Activated CD4-positive, alpha-beta memory T cell treated with anti-CD3 and anti-CD28 coated beads for 36 hours (primary cell): ENCODE measurements at regions of chr1 and their contacts with region 1.

Region 1: DNA sequence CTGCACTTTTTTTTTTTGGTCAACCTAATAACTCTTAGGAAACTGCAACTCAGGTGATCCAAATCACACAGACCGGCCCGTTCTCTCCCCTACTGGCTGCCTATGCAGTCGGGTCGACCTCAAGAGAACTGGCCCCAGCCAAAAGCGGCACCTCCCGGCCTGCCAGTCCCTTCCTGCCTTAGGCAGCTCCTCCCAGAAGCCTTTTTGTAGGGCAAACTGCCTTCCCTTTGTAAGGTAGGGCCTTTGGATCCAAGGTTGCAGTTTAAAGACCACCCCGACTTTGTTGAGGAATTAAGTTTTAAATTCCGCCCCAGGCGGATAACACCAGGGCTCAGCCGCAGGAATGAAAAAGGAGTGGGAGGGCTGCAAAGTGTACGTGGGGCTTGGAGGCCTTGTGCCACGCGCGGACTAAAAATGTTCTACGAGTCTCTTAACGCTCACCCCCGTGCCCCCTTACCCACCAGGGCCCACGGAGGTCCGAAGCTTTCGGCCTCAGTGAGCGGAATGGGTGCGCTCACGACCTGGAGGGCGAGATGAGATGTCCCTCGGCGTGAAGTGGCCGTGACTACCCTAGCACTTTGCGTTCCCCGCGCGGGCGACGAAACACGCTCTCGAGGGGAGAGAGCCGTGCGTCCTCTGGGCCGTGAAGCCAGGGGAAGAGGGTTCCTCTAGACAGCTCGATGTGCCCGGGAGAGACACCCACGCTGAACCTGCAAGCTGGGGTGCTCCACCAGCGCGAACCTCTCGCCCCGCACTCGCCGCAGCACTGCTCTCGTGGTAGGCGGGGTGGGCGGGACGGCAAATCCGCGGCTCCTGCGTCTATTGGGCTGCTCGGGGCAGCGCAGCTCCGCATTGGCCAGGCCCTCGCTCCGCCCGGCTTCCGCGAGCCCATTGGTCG is 489 bp upstream of the ST3GAL3 start:
- DNase-seq: peak; percentile 95
- H3K4me3 Mint-ChIP-seq: peak overlapping the region; percentile 85
- H3K27ac Mint-ChIP-seq: peak overlapping the region; percentile 58
- H3K4me1 Mint-ChIP-seq: peaks cover 29% of the 10 kb centered on the region
- H3K27me3 Mint-ChIP-seq: no peaks in the 10 kb centered on the region

Region 2: DNA sequence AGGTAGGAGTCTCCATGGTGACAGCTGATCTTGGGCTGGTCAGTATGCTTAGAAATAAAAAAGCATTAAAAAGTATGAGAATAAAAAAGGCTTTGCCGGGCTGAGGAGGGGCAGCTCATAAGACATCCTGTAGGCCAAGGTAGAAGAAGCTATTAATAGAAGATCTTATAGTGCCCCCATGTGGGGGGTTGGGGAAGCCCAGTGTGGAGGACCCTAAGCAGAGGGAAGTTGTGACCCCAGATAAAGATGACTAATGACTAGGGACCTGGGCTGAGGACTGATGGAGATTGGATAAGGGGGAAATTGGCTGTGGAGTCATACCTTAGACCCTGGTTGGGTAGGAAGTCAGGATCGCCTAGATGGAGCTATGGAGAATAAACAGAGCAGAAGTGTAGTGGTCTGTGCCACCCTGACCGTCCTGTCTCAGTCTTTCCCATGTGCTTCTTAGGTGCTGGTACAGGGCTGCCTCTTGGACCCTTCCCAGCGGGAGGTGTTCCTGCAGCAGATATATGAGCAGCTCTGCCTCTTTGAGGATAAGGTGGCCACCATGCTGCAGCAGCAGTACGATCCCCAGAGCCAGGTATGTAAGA is 292.1 kb before region 1 on chr1:
- CTCF ChIA-PET with region 1: no interaction called
- POLR2A ChIA-PET with region 1: no interaction called
- intact Hi-C with region 1: no loop called
- DNase-seq: peak; percentile 65
- H3K4me3 Mint-ChIP-seq: no peak overlapping the region
- H3K27ac Mint-ChIP-seq: no peak overlapping the region
- H3K4me1 Mint-ChIP-seq: no peaks in the 10 kb centered on the region
- H3K27me3 Mint-ChIP-seq: no peaks in the 10 kb centered on the region

Region 3: GRCh38 chr1:43454266-43455011 is 252.4 kb before region 1 on chr1:
- CTCF ChIA-PET with region 1: no interaction called
- POLR2A ChIA-PET with region 1: no interaction called
- intact Hi-C with region 1: loop called (anchors 1 kb)
- DNase-seq: peak; percentile 85
- H3K4me3 Mint-ChIP-seq: peak overlapping the region; percentile 80
- H3K27ac Mint-ChIP-seq: peak overlapping the region; percentile 85
- H3K4me1 Mint-ChIP-seq: peaks cover 19% of the 10 kb centered on the region
- H3K27me3 Mint-ChIP-seq: peaks cover 18% of the 10 kb centered on the region

Region 4: DNA sequence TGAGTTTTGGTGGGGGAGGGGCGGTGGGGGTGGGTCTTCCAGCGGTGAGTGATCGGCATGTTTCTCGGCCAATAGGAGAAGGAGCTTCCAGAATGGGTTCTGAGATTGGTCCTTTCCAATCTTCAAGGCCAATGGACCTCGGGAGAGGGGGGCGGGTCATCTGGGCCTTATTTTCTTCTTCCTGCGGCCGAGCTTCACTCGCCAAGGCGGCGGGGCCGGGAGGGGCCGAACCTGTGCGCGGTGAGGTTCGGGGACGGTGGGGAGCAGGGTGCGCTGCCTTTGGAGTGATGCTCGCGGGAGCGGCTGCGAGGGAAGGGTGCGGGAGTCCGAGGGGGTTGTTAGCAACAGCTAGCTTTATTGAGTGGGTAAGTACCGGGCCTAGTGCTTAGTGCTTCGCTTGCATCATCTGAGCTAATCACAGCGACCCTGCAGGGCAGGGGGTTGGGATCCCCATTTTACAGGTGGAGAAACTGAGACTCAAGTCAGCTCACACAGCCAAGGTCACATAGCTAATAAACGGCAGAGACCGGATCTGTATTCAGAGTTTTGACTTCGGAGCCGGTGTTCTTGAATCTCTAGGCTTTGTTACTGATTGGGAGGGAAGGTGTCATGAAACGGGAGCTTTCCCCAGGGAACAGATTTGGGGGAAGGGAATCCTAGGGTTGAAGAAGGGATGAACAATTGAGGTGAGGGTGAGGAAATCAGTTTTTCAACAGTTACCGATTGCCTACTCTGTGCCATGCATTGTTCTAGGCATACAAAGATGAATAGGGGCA is 56.3 kb before region 1 on chr1:
- CTCF ChIA-PET with region 1: interaction called, 3 read pairs
- POLR2A ChIA-PET with region 1: interaction called, 20 read pairs
- intact Hi-C with region 1: loop called (anchors 1 kb)
- DNase-seq: peak; percentile 94
- H3K4me3 Mint-ChIP-seq: peak overlapping the region; percentile 99
- H3K27ac Mint-ChIP-seq: peak overlapping the region; percentile 98
- H3K4me1 Mint-ChIP-seq: peaks cover 30% of the 10 kb centered on the region
- H3K27me3 Mint-ChIP-seq: no peaks in the 10 kb centered on the region

Region 5: DNA sequence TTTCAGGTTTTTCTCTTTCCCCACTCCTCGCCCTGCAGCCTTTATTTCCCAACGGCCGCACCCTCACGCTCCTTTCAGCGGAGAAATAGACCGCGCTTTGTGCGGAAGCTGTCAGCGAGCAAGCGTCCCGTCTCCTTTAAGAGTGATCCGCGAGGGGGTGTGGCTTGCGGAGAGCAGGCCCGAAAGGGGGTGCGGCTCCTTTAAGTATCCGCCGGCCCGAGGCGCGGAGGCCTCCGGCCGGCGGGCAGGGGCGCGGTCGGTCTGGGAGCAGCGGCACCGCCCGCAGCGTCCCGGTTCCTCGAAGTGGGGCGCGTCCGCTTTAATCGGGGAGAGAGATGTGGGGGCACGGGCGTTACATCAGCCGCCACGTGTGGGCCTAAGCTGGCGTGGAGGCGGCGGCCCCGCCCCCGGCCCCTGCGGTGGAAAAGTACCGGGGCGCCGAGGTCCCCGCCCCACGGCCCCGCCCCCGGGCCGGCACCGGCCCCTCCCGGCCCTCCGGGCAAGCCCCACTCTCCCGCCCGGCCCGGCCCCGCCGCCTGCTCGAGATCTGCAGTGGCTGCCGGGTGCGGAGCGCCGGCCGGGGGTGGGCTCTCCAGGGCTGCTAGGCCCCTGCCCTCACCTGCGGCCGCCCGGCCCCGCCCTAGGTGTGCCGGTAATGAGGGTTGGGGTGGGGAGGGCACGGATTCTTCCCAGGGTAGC is 323.2 kb after region 1 on chr1:
- CTCF ChIA-PET with region 1: no interaction called
- POLR2A ChIA-PET with region 1: interaction called, 4 read pairs
- intact Hi-C with region 1: loop called (anchors 2 kb)
- DNase-seq: peak; percentile 92
- H3K4me3 Mint-ChIP-seq: peak overlapping the region; percentile 94
- H3K27ac Mint-ChIP-seq: peak overlapping the region; percentile 95
- H3K4me1 Mint-ChIP-seq: peaks cover 13% of the 10 kb centered on the region
- H3K27me3 Mint-ChIP-seq: no peaks in the 10 kb centered on the region